ENCODE measurements at regions of chr9 and their contacts with region 1.

Region 1: DNA sequence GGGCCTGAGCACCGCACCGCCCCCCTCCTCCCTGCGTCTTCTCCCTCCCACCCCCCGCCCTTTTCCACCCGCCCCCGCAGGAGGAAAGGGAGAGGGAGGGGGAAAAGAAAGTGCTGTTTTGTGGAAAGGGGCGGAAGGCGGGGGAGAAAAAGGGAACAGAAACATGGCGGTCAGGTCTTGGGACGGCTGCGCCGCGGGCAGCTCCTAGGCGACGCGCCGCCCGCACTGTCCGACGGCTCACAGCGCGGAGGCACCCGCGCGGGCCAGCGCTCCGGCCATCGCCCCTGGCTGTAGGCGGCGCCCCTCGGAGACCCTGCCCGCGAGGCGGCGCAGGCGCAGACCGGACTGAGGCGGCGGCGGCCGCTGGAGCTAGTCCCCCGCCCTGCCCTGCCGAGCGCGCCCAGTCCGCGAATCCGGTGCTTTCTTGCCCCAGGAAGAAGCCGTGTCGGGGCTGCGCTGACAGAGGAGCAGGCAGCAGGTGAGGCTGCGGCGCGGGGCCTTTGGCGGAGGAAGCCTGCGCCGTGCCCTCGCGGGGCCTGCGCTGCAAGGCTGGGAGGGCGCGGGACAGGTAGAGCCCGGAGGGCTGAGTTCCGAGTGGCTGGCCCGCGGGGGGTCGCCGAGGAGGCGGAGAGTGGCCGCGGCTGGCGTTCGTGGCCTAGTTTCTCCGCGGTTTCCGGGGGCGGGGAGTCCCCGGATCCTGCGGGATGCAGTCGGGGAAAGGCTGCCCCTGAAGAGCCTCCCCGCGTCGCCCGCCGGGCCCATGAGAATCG is at the start of gene DENND4C:
- DNase-seq: peak; percentile 87
- ATAC-seq: peak; percentile 81
- H3K4me3 Mint-ChIP-seq: no peak within 1 kb of the TSS
- H3K27ac Mint-ChIP-seq: peak within 1 kb of the TSS; percentile 58
- H3K4me1 Mint-ChIP-seq: peaks cover 14% of the 10 kb centered on the region
- H3K27me3 Mint-ChIP-seq: no peaks in the 10 kb centered on the region
- total RNA-seq, gene DENND4C: 17.2 to 22.2 TPM

Region 2: GRCh38 chr9:19102631-19103345 is 127.8 kb before region 1 on chr9 and contains the start of gene HAUS6:
- CTCF ChIA-PET with region 1: no interaction called
- POLR2A ChIA-PET with region 1: no interaction called
- intact Hi-C with region 1: loop called (anchors 1 kb)
- DNase-seq: peak; percentile 98
- ATAC-seq: peak; percentile 98
- H3K4me3 Mint-ChIP-seq: peak within 1 kb of the TSS; percentile 96
- H3K27ac Mint-ChIP-seq: peak within 1 kb of the TSS; percentile 96
- H3K4me1 Mint-ChIP-seq: peaks cover 25% of the 10 kb centered on the region
- H3K27me3 Mint-ChIP-seq: no peaks in the 10 kb centered on the region
- total RNA-seq, gene HAUS6: 29.3 to 32.5 TPM

Region 3: GRCh38 chr9:19161257-19162025 is 69.1 kb before region 1 on chr9:
- CTCF ChIA-PET with region 1: interaction called, 3 read pairs
- POLR2A ChIA-PET with region 1: interaction called, 12 read pairs
- intact Hi-C with region 1: loop called in 1 of 2 experiments (anchors 2 kb)
- DNase-seq: peak; percentile 78
- ATAC-seq: peak; percentile 98
- H3K4me3 Mint-ChIP-seq: peak overlapping the region; percentile 46
- H3K27ac Mint-ChIP-seq: peak overlapping the region; percentile 76
- H3K4me1 Mint-ChIP-seq: peaks cover 25% of the 10 kb centered on the region
- H3K27me3 Mint-ChIP-seq: no peaks in the 10 kb centered on the region

Region 4: DNA sequence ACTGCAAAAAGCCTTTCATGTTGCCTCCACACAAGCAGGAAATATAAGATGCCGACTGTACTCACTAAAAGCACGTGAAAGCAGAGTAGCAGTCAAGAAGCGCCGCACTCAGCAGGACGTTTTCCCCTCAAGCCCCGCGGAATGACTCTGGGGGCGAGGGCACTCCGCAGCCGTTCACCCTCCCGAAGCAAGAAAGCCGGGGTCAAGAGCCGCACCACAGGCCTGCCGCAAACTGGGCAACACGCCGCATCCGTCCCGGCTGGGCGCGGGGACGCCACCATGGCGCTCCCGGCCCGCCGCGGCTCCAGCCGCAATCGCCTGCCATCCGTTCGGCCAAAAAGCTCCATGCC is 149.1 kb after region 1 on chr9:
- CTCF ChIA-PET with region 1: no interaction called
- POLR2A ChIA-PET with region 1: interaction called, 7 read pairs
- intact Hi-C with region 1: loop called (anchors 1 to 2 kb)
- DNase-seq: peak; percentile 54
- ATAC-seq: peak; percentile 16
- H3K4me3 Mint-ChIP-seq: peak overlapping the region; percentile 99
- H3K27ac Mint-ChIP-seq: peak overlapping the region; percentile 100
- H3K4me1 Mint-ChIP-seq: peaks cover 41% of the 10 kb centered on the region
- H3K27me3 Mint-ChIP-seq: no peaks in the 10 kb centered on the region

Region 5: DNA sequence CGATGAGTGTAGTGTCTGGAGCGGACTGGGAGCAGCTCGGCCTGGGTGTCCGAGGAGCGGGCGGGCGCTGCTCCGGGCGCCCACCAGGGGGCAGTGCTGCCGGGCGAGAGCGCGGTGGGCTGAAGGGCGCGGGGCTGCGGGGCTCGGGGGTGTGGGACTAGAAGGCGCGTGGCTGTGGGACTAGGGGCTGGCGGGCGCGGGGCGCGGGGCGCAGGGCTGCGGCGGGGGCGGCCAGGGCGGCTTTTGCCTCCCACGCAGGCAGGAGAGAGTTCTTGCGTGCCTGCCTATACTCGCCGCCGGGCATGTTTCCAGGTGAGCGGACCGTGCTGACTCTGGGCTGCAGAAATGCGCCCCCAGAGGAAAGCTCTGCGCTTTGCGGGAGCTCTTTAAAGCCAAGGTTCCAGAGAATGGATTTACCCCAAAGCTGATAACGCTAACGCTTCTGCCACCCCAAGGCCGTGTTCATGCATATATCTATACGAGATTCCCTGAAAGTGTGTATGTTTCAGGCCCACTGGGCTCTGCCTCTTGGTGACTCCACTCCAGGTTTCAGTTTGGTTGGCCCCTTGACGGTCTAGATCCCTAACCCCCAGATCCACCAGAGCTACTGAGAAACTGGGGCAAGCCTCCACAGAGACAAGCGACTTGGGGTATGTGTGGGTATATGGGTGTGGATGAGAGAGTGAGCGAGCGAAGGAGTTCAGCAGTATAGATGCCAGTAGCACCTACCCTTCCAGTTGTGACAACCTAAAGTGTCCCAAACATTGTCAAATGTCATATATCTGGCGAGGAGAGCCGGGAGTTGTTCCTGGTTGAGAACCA is 234.4 kb after region 1 on chr9:
- CTCF ChIA-PET with region 1: interaction called, 8 read pairs
- POLR2A ChIA-PET with region 1: no interaction called
- intact Hi-C with region 1: loop called in 1 of 2 experiments (anchors 1 kb)
- DNase-seq: peak; percentile 83
- ATAC-seq: peak; percentile 89
- H3K4me3 Mint-ChIP-seq: peak overlapping the region; percentile 77
- H3K27ac Mint-ChIP-seq: peak overlapping the region; percentile 71
- H3K4me1 Mint-ChIP-seq: peaks cover 7% of the 10 kb centered on the region
- H3K27me3 Mint-ChIP-seq: no peaks in the 10 kb centered on the region